K562 (cell line): ENCODE measurements at regions of chr21 and their contacts with region 1.

Region 1: DNA sequence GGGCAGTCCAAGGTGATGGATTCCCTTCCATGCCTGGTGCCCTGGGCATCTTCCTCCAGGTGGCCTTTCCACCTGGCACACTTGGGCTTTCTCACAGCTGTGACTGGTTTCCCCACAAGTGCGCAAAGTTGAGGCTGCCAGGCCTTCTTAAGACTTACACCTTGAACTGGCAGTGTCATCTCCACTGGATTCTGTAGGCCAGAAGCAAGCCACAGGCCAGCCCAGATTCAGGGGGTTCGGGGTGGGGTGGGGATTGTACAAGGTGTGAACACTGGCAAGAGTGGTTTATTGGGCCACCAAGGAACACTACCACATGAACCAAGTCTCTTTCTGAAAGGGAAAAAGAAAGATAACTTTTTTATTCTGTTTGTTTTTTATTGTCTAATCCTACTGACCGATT is 27.2 kb downstream of the DYRK1A start:
- DNase-seq: no peak
- ATAC-seq: no peak
- H3K4me3 ChIP-seq: no peak overlapping the region
- H3K27ac ChIP-seq: no peak overlapping the region
- H3K4me1 ChIP-seq: peaks cover 3 to 10% of the 10 kb centered on the region in 2 experiments; a peak in 3 of 5 replicates
- H3K27me3 ChIP-seq: no peaks in the 10 kb centered on the region
- CTCF ChIP-seq: no peak
- EP300 ChIP-seq: no peak
- POLR2A ChIP-seq: no peak
- RAD21 ChIP-seq: no peak

Region 2: GRCh38 chr21:37380349-37381323 is 13.2 kb before region 1 on chr21:
- CTCF ChIA-PET with region 1: no interaction called
- POLR2A ChIA-PET with region 1: interaction called, 10 read pairs
- in situ Hi-C with region 1: no loop called
- intact Hi-C with region 1: no loop called
- DNase-seq: peak in 1 of 4 experiments; percentile 51
- ATAC-seq: peak; percentile 14
- H3K4me3 ChIP-seq: no peak overlapping the region
- H3K27ac ChIP-seq: peak overlapping the region; percentile 74; the same call in 1 of the 3 replicates
- H3K4me1 ChIP-seq: peaks cover 21 to 60% of the 10 kb centered on the region in 2 experiments
- H3K27me3 ChIP-seq: no peaks in the 10 kb centered on the region
- CTCF ChIP-seq: no peak
- EP300 ChIP-seq: no peak
- POLR2A ChIP-seq: no peak
- RAD21 ChIP-seq: no peak

Region 3: GRCh38 chr21:37593015-37593414 is 199.2 kb after region 1 on chr21:
- CTCF ChIA-PET with region 1: no interaction called
- POLR2A ChIA-PET with region 1: no interaction called
- in situ Hi-C with region 1: no loop called
- intact Hi-C with region 1: no loop called
- DNase-seq: no peak
- ATAC-seq: peak; percentile 48
- H3K4me3 ChIP-seq: no peak overlapping the region
- H3K27ac ChIP-seq: no peak overlapping the region
- H3K4me1 ChIP-seq: peaks cover 0 to 6% of the 10 kb centered on the region in 2 experiments; a peak in 3 of 5 replicates
- H3K27me3 ChIP-seq: peaks cover 28 to 32% of the 10 kb centered on the region in 2 experiments
- CTCF ChIP-seq: no peak
- EP300 ChIP-seq: no peak
- POLR2A ChIP-seq: no peak
- RAD21 ChIP-seq: no peak